Activated B cell treated with CpG ODN at 0.5 μM for 24 hours (primary cell): ENCODE measurements at regions of chr13 and their contacts with region 1.

Region 1: DNA sequence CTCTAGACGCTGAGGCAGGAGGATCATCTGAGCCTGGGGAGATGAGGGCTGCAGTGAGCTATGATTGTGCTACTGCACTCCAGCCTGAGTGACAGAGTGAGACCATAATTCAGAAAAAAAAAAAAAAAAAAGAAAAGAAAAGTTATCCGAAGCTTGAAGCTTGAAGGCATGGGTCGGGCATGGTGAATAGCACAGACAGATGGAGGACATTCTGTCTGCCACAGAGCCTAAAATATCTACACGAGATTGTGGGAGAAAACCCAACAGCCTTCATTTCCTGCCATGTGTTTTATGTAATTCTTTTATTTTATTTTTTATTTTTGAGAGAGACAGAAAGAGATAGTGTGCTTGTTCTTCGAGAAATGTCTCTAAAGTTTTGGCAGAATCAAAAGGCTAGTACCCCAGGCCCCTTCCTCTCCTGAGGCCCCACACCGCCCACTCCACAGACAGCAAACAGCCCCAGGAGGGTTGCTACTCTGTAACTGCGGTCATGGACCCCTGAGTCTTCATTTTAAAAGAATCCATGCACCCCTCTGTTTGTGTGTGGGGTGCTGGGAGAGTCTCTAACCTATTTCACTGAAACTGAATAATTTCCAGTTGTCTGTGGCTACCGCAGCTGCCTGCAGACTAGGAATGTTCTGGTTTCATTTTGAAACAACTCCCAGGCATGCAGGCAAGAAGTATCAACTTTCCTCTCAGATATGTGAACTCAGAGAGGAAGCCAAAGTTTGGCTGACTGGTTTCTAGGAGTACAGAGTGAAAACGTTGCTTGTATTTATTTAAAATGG is 38.4 kb upstream of the RCBTB2 start:
- DNase-seq: no peak
- ATAC-seq: no peak
- H3K4me3 Mint-ChIP-seq: no peak overlapping the region
- H3K27ac Mint-ChIP-seq: no peak overlapping the region
- H3K4me1 Mint-ChIP-seq: peaks cover 19% of the 10 kb centered on the region
- H3K27me3 Mint-ChIP-seq: peaks cover 66% of the 10 kb centered on the region
- CTCF ChIP-seq: no peak

Region 2: DNA sequence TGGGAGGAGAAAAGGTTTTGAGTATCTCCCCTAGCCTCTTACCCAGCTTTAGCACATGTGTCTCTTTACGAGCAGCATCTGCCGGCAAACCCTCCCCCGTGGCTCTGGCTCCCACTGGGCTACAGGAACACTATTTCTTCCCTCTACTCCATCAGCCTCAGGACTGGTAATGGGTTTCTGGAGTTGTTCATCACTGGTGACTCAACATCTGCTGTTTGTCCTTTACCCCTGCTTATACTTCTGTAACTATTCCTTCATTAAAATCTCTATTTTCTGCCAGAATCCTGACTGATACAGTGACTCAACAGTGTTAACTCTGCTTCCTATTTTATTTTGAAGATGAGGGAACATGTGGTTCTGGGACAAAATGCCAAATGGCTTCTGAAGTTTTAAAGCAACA is 1237.1 kb before region 1 on chr13:
- CTCF ChIA-PET with region 1: no interaction called
- POLR2A ChIA-PET with region 1: no interaction called
- intact Hi-C with region 1: no loop called
- DNase-seq: no peak
- ATAC-seq: no peak
- H3K4me3 Mint-ChIP-seq: no peak overlapping the region
- H3K27ac Mint-ChIP-seq: no peak overlapping the region
- H3K4me1 Mint-ChIP-seq: no peaks in the 10 kb centered on the region
- H3K27me3 Mint-ChIP-seq: peaks cover 2% of the 10 kb centered on the region
- CTCF ChIP-seq: no peak

Region 3: DNA sequence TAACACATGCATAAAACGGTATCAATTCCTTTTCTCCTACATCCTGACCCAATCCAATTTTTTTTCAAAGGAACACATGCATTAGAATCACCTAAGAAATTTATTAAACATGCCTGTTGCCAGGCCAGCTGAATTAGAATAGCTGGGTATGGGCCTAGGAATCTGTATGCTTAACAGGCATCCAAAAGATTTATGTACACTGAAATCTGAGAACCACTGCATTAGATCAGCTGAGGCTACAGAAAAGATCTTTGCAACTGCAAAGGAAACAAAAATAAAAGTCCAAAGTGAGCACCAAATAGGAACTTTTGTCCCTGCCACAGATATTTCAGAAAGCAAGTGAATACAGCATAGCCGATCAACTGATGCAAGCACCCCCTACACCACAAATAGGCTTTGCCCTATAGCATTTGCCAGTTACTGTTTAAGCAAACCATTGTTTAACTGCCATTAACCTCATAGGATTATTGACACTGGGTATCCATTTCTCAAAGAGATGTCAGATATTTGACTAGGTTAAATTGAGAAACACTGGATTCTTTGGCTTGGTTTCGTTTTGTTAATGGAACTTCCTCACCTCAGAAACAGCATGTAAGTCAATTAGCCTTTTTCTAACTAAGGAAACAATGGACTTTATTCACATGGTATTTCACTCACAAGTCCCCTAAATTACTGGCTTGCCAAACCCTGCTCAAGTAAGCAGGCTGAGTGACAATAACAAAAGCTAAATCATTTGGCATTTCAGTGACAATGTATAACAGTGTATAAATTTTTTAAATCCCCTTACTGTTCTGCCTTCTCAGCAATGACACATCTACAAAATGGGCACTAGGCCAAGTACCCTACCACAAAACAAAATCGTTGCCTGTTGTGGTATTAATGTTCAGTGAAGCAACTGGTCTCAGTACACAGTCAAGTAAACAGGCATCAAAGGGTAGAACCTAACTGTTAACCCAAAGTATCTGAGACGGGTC is 638.1 kb before region 1 on chr13:
- CTCF ChIA-PET with region 1: no interaction called
- POLR2A ChIA-PET with region 1: interaction called, 13 read pairs
- intact Hi-C with region 1: no loop called
- DNase-seq: no peak
- ATAC-seq: no peak
- H3K4me3 Mint-ChIP-seq: no peak overlapping the region
- H3K27ac Mint-ChIP-seq: no peak overlapping the region
- H3K4me1 Mint-ChIP-seq: no peaks in the 10 kb centered on the region
- H3K27me3 Mint-ChIP-seq: no peaks in the 10 kb centered on the region
- CTCF ChIP-seq: no peak

Region 4: GRCh38 chr13:48542581-48543341 is 28.6 kb before region 1 on chr13:
- CTCF ChIA-PET with region 1: no interaction called
- POLR2A ChIA-PET with region 1: no interaction called
- intact Hi-C with region 1: no loop called
- DNase-seq: no peak
- ATAC-seq: no peak
- H3K4me3 Mint-ChIP-seq: no peak overlapping the region
- H3K27ac Mint-ChIP-seq: no peak overlapping the region
- H3K4me1 Mint-ChIP-seq: no peaks in the 10 kb centered on the region
- H3K27me3 Mint-ChIP-seq: peaks cover 63% of the 10 kb centered on the region
- CTCF ChIP-seq: no peak